H1 (cell line): ENCODE measurements at regions of chr4 and their contacts with region 1.

Region 1: DNA sequence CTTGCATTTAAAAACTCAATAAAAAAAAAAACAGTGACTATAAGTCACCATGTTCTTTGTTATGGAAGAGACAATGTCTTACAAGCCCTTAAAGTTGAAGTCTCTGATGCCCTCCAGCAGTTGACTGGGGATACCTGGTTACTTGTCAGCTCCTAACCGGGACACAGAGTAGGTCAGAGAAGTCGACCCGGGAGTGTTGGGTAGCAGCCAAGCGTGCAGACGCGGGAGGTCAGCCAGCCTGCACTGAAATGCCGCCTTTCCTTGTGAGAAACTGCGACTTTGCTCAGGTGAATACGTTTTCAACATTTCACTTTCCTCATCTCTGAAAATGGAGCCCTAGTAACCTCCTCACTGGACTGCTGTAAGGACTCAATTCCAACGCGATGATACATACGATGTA is 81.8 kb downstream of the F11 start:
- DNase-seq: no peak
- H3K4me3 ChIP-seq: no peak overlapping the region
- H3K27ac ChIP-seq: no peak overlapping the region
- H3K4me1 ChIP-seq: peaks cover 0 to 4% (median 2%) of the 10 kb centered on the region in 4 experiments; a peak in 3 of 7 replicates
- H3K27me3 ChIP-seq: peaks cover 24 to 55% (median 50%) of the 10 kb centered on the region in 4 experiments
- CTCF ChIP-seq: no peak
- EP300 ChIP-seq: no peak
- POLR2A ChIP-seq: no peak
- RAD21 ChIP-seq: no peak

Region 2: DNA sequence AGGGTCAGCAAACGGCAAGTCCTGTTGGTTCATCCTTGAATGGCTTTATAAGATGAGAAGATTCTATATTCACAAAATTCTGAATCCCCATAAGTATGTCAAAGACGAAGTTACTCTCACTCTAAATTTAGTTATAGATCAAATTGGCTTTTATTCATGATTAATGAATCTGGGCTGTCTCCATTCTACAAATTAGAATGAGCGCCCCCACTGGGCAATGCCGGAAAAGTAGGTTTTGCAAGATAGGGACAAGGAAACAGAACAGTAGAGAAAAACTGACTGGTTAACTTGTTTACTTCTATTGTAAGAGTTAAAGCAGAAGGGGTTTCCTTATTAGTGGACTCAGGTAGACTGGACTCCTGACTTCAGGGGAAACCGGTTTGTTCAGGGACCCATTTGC is 18.6 kb after region 1 on chr4:
- CTCF ChIA-PET with region 1: interaction called, 10 read pairs
- POLR2A ChIA-PET with region 1: interaction called, 3 read pairs
- DNase-seq: peak in 1 of 2 experiments; percentile 60
- H3K4me3 ChIP-seq: no peak overlapping the region
- H3K27ac ChIP-seq: no peak overlapping the region
- H3K4me1 ChIP-seq: no peaks in the 10 kb centered on the region
- H3K27me3 ChIP-seq: no peaks in the 10 kb centered on the region
- CTCF ChIP-seq: peak in 2 of 3 experiments; percentile 26 to 43; a peak in 2 of 4 replicates
- EP300 ChIP-seq: no peak
- POLR2A ChIP-seq: no peak
- RAD21 ChIP-seq: peak in 1 of 2 experiments; percentile 6; a peak in 1 of 4 replicates